Astrocyte of the cerebellum (primary cell): ENCODE measurements at regions of chr6 and their contacts with region 1.

Region 1: DNA sequence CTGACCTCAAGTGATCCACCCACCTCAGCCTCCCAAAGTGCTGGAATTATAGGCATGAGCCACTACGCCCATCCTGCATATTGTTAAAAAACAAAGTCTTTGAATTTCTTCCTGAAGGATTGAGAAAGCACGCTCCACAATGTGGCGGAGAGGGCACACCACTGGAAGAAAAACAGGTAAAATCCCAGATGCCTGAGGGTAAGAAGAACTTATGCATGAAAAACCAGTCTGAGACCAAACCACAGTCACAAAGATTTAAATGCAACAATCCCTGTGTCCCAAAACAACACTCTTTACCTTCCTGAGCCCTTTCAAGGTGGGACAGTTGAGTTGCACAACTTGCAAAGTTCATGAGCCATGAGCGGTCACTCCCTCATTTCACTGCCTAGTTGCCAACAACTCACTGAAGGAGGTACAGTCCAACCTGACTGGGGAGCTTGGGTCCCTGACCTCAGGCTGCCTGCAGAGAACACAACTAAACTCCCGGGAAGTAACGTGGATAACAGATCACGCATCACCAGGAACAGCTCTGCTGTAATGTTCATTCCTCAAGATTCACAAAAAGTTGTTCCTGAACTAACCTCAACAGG is 69.5 kb downstream of the MBOAT1 start:
- DNase-seq: no peak
- H3K4me3 ChIP-seq: no peak overlapping the region
- CTCF ChIP-seq: no peak

Region 2: DNA sequence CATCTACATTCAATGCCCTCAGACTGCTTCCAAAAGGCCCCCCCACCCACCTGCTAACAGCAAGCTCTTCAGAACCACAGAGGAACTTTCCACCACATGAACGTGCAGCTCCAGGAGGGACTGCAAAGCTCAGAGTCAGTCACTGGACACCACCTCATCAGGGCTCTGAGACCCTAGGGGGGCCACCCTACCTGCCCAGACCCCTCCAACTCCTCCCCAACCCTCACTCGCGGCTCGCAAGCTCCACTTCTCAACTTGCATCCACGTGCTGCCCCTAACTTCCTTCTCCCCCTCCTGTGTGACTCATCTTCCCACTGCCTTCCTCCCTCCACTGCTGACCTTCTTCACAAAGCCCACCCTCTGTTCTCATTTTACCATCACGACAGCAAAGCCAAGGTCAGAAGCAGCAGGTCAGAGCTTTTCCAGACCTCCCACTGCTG is 63.0 kb after region 1 on chr6:
- in situ Hi-C with region 1: loop called (anchors 5 kb)
- DNase-seq: no peak
- H3K4me3 ChIP-seq: no peak overlapping the region
- CTCF ChIP-seq: no peak

Region 3: DNA sequence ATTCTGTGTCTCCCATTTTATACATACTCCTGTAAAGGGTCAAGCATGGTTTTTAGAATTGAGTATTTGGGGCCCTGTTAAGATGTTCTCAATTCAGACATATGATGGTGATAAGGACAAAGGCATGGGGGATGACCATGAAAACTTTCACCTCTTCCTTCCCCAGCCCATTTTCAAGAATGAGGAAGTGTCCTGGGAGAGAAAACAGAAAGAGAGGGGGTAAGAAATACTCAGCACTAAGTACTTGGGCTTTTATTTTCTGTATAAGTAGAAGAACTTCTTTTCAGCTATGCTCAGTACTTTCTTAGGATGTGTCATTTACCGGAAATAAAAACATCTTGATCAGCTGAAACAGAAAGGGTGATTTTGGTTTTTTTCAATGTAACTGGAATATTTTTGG is 80.4 kb after region 1 on chr6:
- in situ Hi-C with region 1: no loop called
- DNase-seq: no peak
- H3K4me3 ChIP-seq: no peak overlapping the region
- CTCF ChIP-seq: no peak